Mammary epithelial cell (primary cell): ENCODE measurements at regions of chr13 and their contacts with region 1.

Region 1: GRCh38 chr13:27406178-27406939 is 18.1 kb upstream of the GTF3A start:
- DNase-seq: peak; percentile 35
- H3K4me3 ChIP-seq: no peak overlapping the region
- H3K27ac ChIP-seq: no peak overlapping the region
- H3K4me1 ChIP-seq: no peaks in the 10 kb centered on the region
- H3K27me3 ChIP-seq: no peaks in the 10 kb centered on the region
- CTCF ChIP-seq: peak; percentile 46 to 68

Region 2: GRCh38 chr13:27424246-27425157 is 18.1 kb after region 1 on chr13 and contains the start of gene GTF3A:
- CTCF ChIA-PET with region 1: no interaction called
- dilution Hi-C with region 1: no loop called
- in situ Hi-C with region 1: no loop called
- intact Hi-C with region 1: loop called (anchors 2 kb)
- DNase-seq: peak; percentile 83
- H3K4me3 ChIP-seq: peak within 1 kb of the TSS; percentile 58 to 68 (median 62)
- H3K27ac ChIP-seq: peak within 1 kb of the TSS; percentile 64
- H3K4me1 ChIP-seq: peaks cover 33% of the 10 kb centered on the region
- H3K27me3 ChIP-seq: no peaks in the 10 kb centered on the region
- CTCF ChIP-seq: no peak
- total RNA-seq, gene GTF3A: 62.0 to 69.3 TPM

Region 3: GRCh38 chr13:27455331-27455855 is 49.0 kb after region 1 on chr13:
- CTCF ChIA-PET with region 1: no interaction called
- dilution Hi-C with region 1: no loop called
- in situ Hi-C with region 1: no loop called
- intact Hi-C with region 1: no loop called
- DNase-seq: no peak
- H3K4me3 ChIP-seq: no peak overlapping the region
- H3K27ac ChIP-seq: no peak overlapping the region
- H3K4me1 ChIP-seq: peaks cover 9% of the 10 kb centered on the region
- H3K27me3 ChIP-seq: no peaks in the 10 kb centered on the region
- CTCF ChIP-seq: no peak